Activated B cell treated with CpG ODN at 0.5 μM for 24 hours (primary cell): ENCODE measurements at regions of chr15 and their contacts with region 1.

Region 1: GRCh38 chr15:63881431-63881830 is 47.7 kb upstream of the HERC1 start:
- DNase-seq: no peak
- ATAC-seq: peak; percentile 84
- H3K4me3 Mint-ChIP-seq: peak overlapping the region; percentile 61
- H3K27ac Mint-ChIP-seq: peak overlapping the region; percentile 86
- H3K4me1 Mint-ChIP-seq: peaks cover 68% of the 10 kb centered on the region
- H3K27me3 Mint-ChIP-seq: no peaks in the 10 kb centered on the region
- CTCF ChIP-seq: no peak

Region 2: DNA sequence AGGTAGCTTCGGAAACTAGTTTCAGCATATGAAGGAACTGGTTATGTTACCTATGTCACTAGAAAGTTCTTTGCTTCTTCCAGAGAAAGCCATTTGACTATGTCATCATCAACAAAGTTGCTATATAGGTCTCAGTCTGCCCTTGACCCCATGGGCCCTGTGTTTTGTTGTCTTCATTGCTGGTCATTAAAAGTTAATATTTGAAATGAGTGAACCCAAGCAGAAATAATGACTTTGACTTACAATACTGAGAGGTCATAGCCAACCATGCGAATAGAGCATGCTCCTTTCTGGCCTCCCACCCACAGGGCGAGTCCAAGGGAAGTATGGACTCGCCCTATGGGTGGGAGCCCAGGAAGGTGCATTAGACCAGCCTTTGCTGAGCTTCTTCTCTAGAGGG is 563.1 kb before region 1 on chr15:
- CTCF ChIA-PET with region 1: no interaction called
- POLR2A ChIA-PET with region 1: no interaction called
- intact Hi-C with region 1: no loop called
- DNase-seq: no peak
- ATAC-seq: no peak
- H3K4me3 Mint-ChIP-seq: no peak overlapping the region
- H3K27ac Mint-ChIP-seq: no peak overlapping the region
- H3K4me1 Mint-ChIP-seq: peaks cover 6% of the 10 kb centered on the region
- H3K27me3 Mint-ChIP-seq: no peaks in the 10 kb centered on the region
- CTCF ChIP-seq: no peak

Region 3: DNA sequence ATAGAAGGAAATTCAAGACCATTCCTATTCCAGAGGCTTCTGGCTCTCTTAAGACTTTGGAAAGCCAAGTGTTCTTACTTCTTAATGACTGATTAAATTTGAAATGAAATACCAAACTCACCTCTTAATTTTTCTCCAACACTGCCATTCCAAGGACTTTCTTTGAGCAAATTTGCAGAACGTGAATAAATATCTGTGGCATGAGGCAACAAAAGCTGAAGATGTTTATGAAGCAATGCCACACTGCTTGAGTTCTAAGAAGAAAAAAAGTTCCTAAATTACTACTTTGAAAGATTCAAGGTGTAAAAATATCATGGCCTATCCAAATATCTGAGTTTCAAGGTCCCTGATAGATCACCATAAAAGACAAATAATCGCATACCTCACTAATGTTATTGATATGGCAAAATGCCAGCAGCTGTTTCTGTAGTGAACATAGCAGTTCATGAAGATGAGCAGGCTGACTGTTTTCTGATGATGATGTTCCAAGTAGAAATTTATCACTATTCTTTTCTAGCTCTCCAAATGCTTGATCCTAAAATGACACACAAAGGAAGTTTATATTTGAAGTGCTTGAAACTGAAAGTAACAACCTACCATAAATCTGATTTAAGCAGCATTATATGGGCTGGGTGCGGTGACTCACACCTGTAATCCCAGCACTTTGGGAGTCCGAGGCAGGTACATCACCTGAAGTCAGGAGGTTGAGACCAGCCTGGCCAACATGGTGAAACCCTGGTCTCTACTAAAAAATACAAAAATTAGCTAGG is 152.1 kb before region 1 on chr15:
- CTCF ChIA-PET with region 1: no interaction called
- POLR2A ChIA-PET with region 1: no interaction called
- intact Hi-C with region 1: no loop called
- DNase-seq: no peak
- ATAC-seq: no peak
- H3K4me3 Mint-ChIP-seq: no peak overlapping the region
- H3K27ac Mint-ChIP-seq: no peak overlapping the region
- H3K4me1 Mint-ChIP-seq: no peaks in the 10 kb centered on the region
- H3K27me3 Mint-ChIP-seq: no peaks in the 10 kb centered on the region
- CTCF ChIP-seq: no peak

Region 4: GRCh38 chr15:63833021-63833696 is 48.3 kb before region 1 on chr15:
- CTCF ChIA-PET with region 1: interaction called, 3 read pairs
- POLR2A ChIA-PET with region 1: interaction called, 40 read pairs
- intact Hi-C with region 1: loop called (anchors 1 kb)
- DNase-seq: peak; percentile 44
- ATAC-seq: peak; percentile 43
- H3K4me3 Mint-ChIP-seq: peak overlapping the region; percentile 97
- H3K27ac Mint-ChIP-seq: peak overlapping the region; percentile 74
- H3K4me1 Mint-ChIP-seq: peaks cover 48% of the 10 kb centered on the region
- H3K27me3 Mint-ChIP-seq: no peaks in the 10 kb centered on the region
- CTCF ChIP-seq: no peak

Region 5: GRCh38 chr15:63870403-63871209 is 10.8 kb before region 1 on chr15:
- CTCF ChIA-PET with region 1: interaction called, 3 read pairs
- POLR2A ChIA-PET with region 1: interaction called, 63 read pairs
- intact Hi-C with region 1: loop called (anchors 1 kb)
- DNase-seq: no peak
- ATAC-seq: no peak
- H3K4me3 Mint-ChIP-seq: no peak overlapping the region
- H3K27ac Mint-ChIP-seq: peak overlapping the region; percentile 84
- H3K4me1 Mint-ChIP-seq: peaks cover 27% of the 10 kb centered on the region
- H3K27me3 Mint-ChIP-seq: no peaks in the 10 kb centered on the region
- CTCF ChIP-seq: no peak